Naive thymus-derived CD4-positive, alpha-beta T cell (primary cell): ENCODE measurements at regions of chr1 and their contacts with region 1.

Region 1: GRCh38 chr1:101309334-101310311 is 72.8 kb downstream of the S1PR1 start:
- DNase-seq: peak; percentile 53 to 95 (median 91)
- ATAC-seq: peak; percentile 86
- H3K4me3 ChIP-seq: peak overlapping the region; percentile 42
- H3K4me3 Mint-ChIP-seq: peak overlapping the region; percentile 74 to 89 (median 85)
- H3K27ac ChIP-seq: peak overlapping the region; percentile 92
- H3K27ac Mint-ChIP-seq: peak overlapping the region; percentile 93 to 99 (median 98)
- H3K4me1 ChIP-seq: peaks cover 46 to 53% of the 10 kb centered on the region in 2 donors
- H3K4me1 Mint-ChIP-seq: peaks cover 43 to 79% (median 66%) of the 10 kb centered on the region in 7 donors
- H3K27me3 ChIP-seq: no peaks in the 10 kb centered on the region
- H3K27me3 Mint-ChIP-seq: peaks cover 0 to 22% (median 0%) of the 10 kb centered on the region in 5 donors

Region 2: DNA sequence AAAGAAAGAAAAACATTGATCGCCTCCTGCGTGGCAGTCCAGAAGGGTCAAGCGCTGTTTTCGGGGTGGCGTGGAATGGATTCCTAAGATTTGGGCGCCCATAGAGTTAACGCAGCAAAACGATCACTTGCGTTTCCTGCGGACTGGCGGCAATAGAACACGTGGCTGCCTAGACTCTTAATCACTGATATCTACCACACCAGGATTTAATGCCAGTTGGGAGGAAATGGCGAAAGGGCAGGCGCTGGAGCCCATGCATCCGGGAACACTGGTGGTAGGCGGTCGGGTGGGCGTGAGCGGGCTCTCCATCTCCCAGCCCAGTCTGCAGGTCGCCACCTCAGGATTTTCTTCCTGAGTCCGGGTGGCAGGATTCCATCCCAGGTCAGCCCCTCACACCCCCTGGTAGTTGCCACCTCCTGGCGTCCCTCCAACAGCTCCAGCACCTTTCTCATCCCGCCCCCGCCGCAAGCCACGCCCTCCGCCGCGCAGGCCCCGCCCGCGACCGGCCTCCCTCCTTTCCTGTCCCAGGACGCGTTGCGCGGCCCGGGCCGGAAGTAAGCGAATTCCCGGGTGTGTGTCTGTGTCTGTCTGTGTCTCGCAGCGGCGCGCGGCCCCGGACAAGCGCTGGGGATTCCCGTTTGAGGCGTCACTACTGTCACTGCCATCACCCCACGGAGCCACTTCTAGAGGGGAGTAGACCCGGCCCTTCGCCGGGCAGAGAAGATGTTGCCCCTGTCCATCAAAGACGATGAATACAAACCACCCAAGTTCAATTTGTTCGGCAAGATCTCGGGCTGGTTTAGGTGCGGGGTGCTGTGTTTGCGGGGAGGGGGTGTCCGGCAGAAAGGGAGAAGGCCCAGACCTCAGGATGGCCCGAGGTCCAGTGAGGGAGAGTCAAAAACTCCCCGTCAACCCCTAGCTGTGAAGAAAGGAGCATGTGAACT is 413.8 kb before region 1 on chr1 and contains the start of gene SLC30A7:
- CTCF ChIA-PET with region 1: no interaction called
- POLR2A ChIA-PET with region 1: interaction called, 17 read pairs
- intact Hi-C with region 1: loop called in 1 of 2 experiments (anchors 1 kb)
- DNase-seq: peak; percentile 93 to 99 (median 94)
- ATAC-seq: peak; percentile 90
- H3K4me3 ChIP-seq: peak within 1 kb of the TSS; percentile 96
- H3K4me3 Mint-ChIP-seq: peak within 1 kb of the TSS; percentile 91 to 100 (median 99)
- H3K27ac ChIP-seq: peak within 1 kb of the TSS; percentile 95
- H3K27ac Mint-ChIP-seq: peak within 1 kb of the TSS; percentile 95 to 100 (median 99)
- H3K4me1 ChIP-seq: peaks cover 7 to 10% of the 10 kb centered on the region in 2 donors
- H3K4me1 Mint-ChIP-seq: peaks cover 17 to 58% (median 50%) of the 10 kb centered on the region in 7 donors
- H3K27me3 ChIP-seq: no peaks in the 10 kb centered on the region
- H3K27me3 Mint-ChIP-seq: no peaks in the 10 kb centered on the region
- total RNA-seq, gene SLC30A7: 29.9 to 44.5 (median 38.8) TPM

Region 3: DNA sequence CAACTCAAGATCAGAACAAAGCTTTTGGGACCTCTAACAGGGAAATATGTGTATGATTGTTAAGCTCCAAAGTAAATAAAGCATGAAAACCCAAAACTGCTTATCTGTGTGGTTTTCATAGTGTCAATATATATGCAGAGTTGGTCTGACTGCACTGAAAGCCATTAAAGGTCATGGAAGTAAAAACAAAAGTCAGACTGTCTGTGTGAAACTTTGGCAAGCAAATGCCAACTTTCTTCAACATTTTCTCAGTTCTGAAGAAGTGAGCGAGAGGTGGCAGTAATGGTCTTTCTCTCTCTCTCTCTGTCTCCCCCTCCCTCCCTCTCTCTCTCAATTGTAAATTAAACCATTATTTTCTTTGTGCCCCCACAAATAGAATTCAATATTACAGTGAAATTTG is 172.9 kb before region 1 on chr1:
- CTCF ChIA-PET with region 1: interaction called, 8 read pairs
- POLR2A ChIA-PET with region 1: no interaction called
- intact Hi-C with region 1: loop called in 1 of 2 experiments (anchors 1 kb)
- DNase-seq: peak in 7 of 9 donors; percentile 11 to 59 (median 45)
- ATAC-seq: peak; percentile 77
- H3K4me3 ChIP-seq: no peak overlapping the region
- H3K4me3 Mint-ChIP-seq: peak overlapping the region in 9 of 10 donors; percentile 23 to 62 (median 49)
- H3K27ac ChIP-seq: peak overlapping the region; percentile 19
- H3K27ac Mint-ChIP-seq: peak overlapping the region; percentile 67 to 93 (median 85)
- H3K4me1 ChIP-seq: peaks cover 17 to 32% of the 10 kb centered on the region in 2 donors
- H3K4me1 Mint-ChIP-seq: peaks cover 37 to 67% (median 66%) of the 10 kb centered on the region in 7 donors
- H3K27me3 ChIP-seq: no peaks in the 10 kb centered on the region
- H3K27me3 Mint-ChIP-seq: no peaks in the 10 kb centered on the region

Region 4: DNA sequence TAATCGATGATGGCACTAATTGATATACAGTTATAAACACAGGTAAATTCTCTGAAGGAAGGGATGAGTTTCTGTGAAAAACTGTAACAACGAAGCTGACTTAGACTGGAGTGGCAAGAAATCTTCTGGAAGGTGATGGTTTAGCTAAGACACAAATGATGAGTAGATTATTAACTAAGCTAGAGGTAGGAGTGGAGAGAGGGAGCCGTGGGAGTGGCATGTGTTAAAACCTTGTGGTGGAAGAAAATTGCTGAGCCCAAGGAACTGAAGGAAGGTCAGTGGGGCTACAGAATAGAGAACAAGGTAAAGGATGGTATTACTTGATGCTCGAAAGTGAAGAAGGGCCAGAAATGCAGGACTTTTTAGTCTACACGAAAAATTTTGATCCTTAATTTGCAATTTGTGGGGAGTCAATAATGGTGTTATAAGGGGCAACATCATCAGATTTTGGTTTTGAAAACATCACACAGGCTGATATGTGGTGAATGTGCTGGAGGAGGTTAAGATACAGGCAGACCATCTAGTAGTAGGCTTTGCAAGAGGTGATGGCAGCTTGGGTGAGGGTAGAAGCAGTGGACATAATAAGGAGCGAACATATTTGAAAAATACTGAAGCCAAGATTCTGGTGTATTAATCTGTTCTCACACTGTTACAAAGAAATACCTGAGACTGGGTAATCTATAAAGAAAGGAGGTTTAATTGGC is 21.0 kb after region 1 on chr1:
- CTCF ChIA-PET with region 1: interaction called, 4 read pairs
- POLR2A ChIA-PET with region 1: interaction called, 5 read pairs
- intact Hi-C with region 1: loop called in 1 of 2 experiments (anchors 2 kb)
- DNase-seq: no peak
- ATAC-seq: no peak
- H3K4me3 ChIP-seq: no peak overlapping the region
- H3K4me3 Mint-ChIP-seq: no peak overlapping the region
- H3K27ac ChIP-seq: no peak overlapping the region
- H3K27ac Mint-ChIP-seq: peak overlapping the region in 1 of 9 donors; percentile 13
- H3K4me1 ChIP-seq: peaks cover 0 to 6% of the 10 kb centered on the region in 2 donors
- H3K4me1 Mint-ChIP-seq: peaks cover 0 to 26% (median 0%) of the 10 kb centered on the region in 7 donors
- H3K27me3 ChIP-seq: no peaks in the 10 kb centered on the region
- H3K27me3 Mint-ChIP-seq: peaks cover 0 to 23% (median 0%) of the 10 kb centered on the region in 5 donors

Region 5: GRCh38 chr1:101364370-101365120 is 54.9 kb after region 1 on chr1:
- CTCF ChIA-PET with region 1: interaction called, 94 read pairs
- POLR2A ChIA-PET with region 1: interaction called, 38 read pairs
- intact Hi-C with region 1: no loop called
- DNase-seq: no peak
- ATAC-seq: no peak
- H3K4me3 ChIP-seq: no peak overlapping the region
- H3K4me3 Mint-ChIP-seq: no peak overlapping the region
- H3K27ac ChIP-seq: no peak overlapping the region
- H3K27ac Mint-ChIP-seq: no peak overlapping the region
- H3K4me1 ChIP-seq: no peaks in the 10 kb centered on the region
- H3K4me1 Mint-ChIP-seq: peaks cover 0 to 5% (median 2%) of the 10 kb centered on the region in 7 donors
- H3K27me3 ChIP-seq: no peaks in the 10 kb centered on the region
- H3K27me3 Mint-ChIP-seq: peaks cover 0 to 2% (median 0%) of the 10 kb centered on the region in 5 donors

Region 6: GRCh38 chr1:101506541-101507164 is 197.0 kb after region 1 on chr1:
- CTCF ChIA-PET with region 1: interaction called, 7 read pairs
- POLR2A ChIA-PET with region 1: no interaction called
- intact Hi-C with region 1: loop called in 1 of 2 experiments (anchors 1 kb)
- DNase-seq: peak in 6 of 9 donors; percentile 8 to 56 (median 44)
- ATAC-seq: peak; percentile 73
- H3K4me3 ChIP-seq: no peak overlapping the region
- H3K4me3 Mint-ChIP-seq: no peak overlapping the region
- H3K27ac ChIP-seq: no peak overlapping the region
- H3K27ac Mint-ChIP-seq: no peak overlapping the region
- H3K4me1 ChIP-seq: no peaks in the 10 kb centered on the region
- H3K4me1 Mint-ChIP-seq: peaks cover 0 to 1% (median 0%) of the 10 kb centered on the region in 7 donors
- H3K27me3 ChIP-seq: no peaks in the 10 kb centered on the region
- H3K27me3 Mint-ChIP-seq: peaks cover 0 to 28% (median 0%) of the 10 kb centered on the region in 5 donors